Activated T-helper 1 cell treated with anti-CD3 and anti-CD28 coated beads, Interleukin-12 subunit alpha, Interleukin-12 subunit beta, Interleukin-2, Interleukin-4 antibody, amounts not matched to agents 30 ng/mL and 10 ng/mL and 1 ng/mL, durations not matched to agents 14 hours and 24 hours and 36 hours (primary cell): ENCODE measurements at regions of chr4 and their contacts with region 1.

Region 1: GRCh38 chr4:170047771-170048354 is 21.7 kb upstream of the MFAP3L start:
- DNase-seq: no peak
- H3K4me3 Mint-ChIP-seq: no peak overlapping the region
- H3K27ac Mint-ChIP-seq: no peak overlapping the region
- H3K4me1 Mint-ChIP-seq: no peaks in the 10 kb centered on the region
- H3K27me3 Mint-ChIP-seq: peaks cover 5% of the 10 kb centered on the region

Region 2: DNA sequence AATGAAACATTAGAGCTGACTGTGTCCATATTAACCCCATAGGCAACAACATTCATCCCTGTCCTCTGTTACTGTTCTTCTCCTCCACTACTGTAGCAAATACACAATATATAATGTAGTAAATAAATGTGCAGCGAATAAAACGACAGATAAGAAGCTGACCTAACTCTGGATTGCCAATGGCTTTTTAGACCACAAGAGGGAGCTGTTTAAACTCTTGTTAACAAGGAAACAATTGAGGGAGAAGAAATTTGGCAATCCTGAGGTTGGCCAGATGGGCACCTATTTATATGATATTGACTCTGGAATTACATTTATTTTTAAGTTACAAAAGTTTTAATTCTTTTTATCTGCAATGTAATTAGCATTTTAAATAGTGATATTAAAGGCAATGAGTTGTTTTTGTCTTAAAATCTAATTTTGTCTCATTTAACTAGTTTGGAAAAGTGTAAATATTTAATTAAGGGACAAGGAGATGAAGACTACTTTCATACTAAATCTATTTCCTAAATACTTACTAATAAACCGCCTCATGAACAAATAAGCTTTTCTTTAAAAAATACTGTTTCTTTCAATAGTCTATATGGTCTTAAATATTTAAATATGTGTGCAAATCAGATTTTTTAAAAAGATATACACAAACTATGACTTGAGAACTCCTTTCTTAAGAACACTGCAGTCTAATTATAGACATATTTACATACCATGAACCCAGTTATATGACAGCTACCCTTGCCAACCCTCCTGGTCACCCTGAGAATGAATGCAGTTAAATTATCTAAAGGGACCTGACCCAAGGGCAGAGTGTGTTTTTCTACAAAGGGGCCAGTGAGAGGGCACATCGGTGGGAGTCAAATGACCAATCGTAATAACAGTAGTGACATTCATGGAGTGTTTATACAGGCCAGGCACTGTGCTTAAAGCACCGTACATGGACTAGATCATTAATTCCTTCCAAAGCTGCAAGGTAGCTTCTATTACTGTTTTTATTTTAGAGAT is 237.2 kb before region 1 on chr4:
- intact Hi-C with region 1: loop called (anchors 1 kb)
- DNase-seq: no peak
- H3K4me3 Mint-ChIP-seq: no peak overlapping the region
- H3K27ac Mint-ChIP-seq: no peak overlapping the region
- H3K4me1 Mint-ChIP-seq: peaks cover 4% of the 10 kb centered on the region
- H3K27me3 Mint-ChIP-seq: peaks cover 7% of the 10 kb centered on the region